H1 (cell line): ENCODE measurements at regions of chr16 and their contacts with region 1.

Region 1: DNA sequence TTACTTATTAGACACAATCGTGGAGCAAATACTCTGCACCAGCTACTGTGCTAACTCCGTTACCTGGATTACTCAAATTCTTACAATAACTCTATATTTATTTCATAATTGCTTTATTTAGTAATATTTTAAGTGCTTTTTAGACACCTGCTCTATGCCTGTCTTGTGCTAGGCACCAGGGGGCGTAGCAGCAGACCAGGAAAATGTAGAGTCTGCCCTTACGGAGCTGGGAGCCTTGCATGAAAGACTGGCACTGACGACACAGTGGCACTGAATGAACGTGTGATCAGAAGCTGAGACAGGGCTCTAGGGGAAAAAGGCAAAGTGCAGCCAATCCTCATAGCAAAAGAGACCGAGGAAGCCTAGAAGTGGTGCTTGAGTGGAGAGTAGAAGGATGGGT is 486.5 kb downstream of the CDH13 start:
- DNase-seq: peak in 1 of 2 experiments; percentile 59
- H3K4me3 ChIP-seq: no peak overlapping the region
- H3K27ac ChIP-seq: no peak overlapping the region
- H3K4me1 ChIP-seq: peaks cover 0 to 8% (median 4%) of the 10 kb centered on the region in 4 experiments; a peak in 4 of 7 replicates
- H3K27me3 ChIP-seq: peaks cover 0 to 5% (median 0%) of the 10 kb centered on the region in 4 experiments; a peak in 2 of 7 replicates
- CTCF ChIP-seq: peak; percentile 71 to 77 (median 72)
- EP300 ChIP-seq: no peak
- POLR2A ChIP-seq: no peak
- RAD21 ChIP-seq: peak; percentile 54 to 71

Region 2: GRCh38 chr16:83125999-83126568 is 12.8 kb after region 1 on chr16:
- CTCF ChIA-PET with region 1: interaction called, 19 read pairs
- POLR2A ChIA-PET with region 1: interaction called, 3 read pairs
- DNase-seq: no peak
- H3K4me3 ChIP-seq: no peak overlapping the region
- H3K27ac ChIP-seq: no peak overlapping the region
- H3K4me1 ChIP-seq: peaks cover 0 to 3% (median 0%) of the 10 kb centered on the region in 4 experiments; a peak in 2 of 7 replicates
- H3K27me3 ChIP-seq: no peaks in the 10 kb centered on the region
- CTCF ChIP-seq: peak in 1 of 3 experiments; percentile 13; a peak in 1 of 4 replicates
- EP300 ChIP-seq: no peak
- POLR2A ChIP-seq: no peak
- RAD21 ChIP-seq: no peak

Region 3: GRCh38 chr16:83187405-83187804 is 74.1 kb after region 1 on chr16:
- CTCF ChIA-PET with region 1: no interaction called
- POLR2A ChIA-PET with region 1: no interaction called
- DNase-seq: no peak
- H3K4me3 ChIP-seq: no peak overlapping the region
- H3K27ac ChIP-seq: no peak overlapping the region
- H3K4me1 ChIP-seq: no peaks in the 10 kb centered on the region
- H3K27me3 ChIP-seq: no peaks in the 10 kb centered on the region
- CTCF ChIP-seq: no peak
- EP300 ChIP-seq: no peak
- POLR2A ChIP-seq: no peak
- RAD21 ChIP-seq: no peak